ENCODE measurements at regions of chr9 and their contacts with region 1.

Region 1: GRCh38 chr9:69421908-69422801 is 97.1 kb downstream of the ENTREP1 start:
- DNase-seq: peak; percentile 36
- ATAC-seq: peak; percentile 85

Region 2: GRCh38 chr9:69549310-69550202 is 127.4 kb after region 1 on chr9:
- intact Hi-C with region 1: loop called (anchors 2 to 5 kb)
- DNase-seq: peak in 1 of 2 donors; percentile 7
- ATAC-seq: peak; percentile 66

Region 3: GRCh38 chr9:69877854-69878514 is 455.8 kb after region 1 on chr9:
- intact Hi-C with region 1: loop called in 1 of 2 experiments (anchors 5 kb)
- DNase-seq: no peak
- ATAC-seq: peak; percentile 78

Measured in left colon (tissue), 2 donors.